ENCODE measurements at regions of chr17 and their contacts with region 1.

Region 1: DNA sequence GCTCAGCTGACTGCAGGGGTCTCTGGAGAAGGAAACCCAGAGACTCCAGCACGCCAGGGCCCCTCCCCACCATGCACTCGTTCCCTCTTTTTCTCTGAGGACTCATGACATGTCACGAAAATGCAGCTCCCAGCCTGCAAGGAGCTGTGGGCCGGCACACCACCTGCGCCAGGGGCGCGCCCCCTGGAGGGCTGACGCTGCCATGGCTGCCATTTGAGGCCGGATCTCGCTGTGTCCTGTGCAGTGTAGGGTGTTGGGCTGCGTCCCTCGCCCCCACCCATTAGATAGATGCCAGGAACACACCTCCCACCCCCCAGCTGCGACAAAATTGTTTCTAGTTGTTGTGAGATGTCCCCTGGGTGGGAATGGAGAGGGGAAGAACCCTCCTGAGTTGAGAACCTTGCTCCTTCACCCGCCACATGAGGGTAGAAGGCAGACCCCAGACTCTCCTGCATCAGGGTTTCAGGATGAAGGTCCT is 8.2 kb downstream of the SYNGR2 start:
- DNase-seq: peak in 1 of 2 donors; percentile 65
- ATAC-seq: no peak
- H3K4me3 ChIP-seq: no peak overlapping the region
- H3K27ac ChIP-seq: peak overlapping the region in 3 of 4 donors; percentile 92 to 96 (median 95)
- H3K4me1 ChIP-seq: peaks cover 58 to 72% of the 10 kb centered on the region in 2 donors
- H3K27me3 ChIP-seq: no peaks in the 10 kb centered on the region
- CTCF ChIP-seq: peak; percentile 74 to 91 (median 86)
- POLR2A ChIP-seq: no peak

Region 2: GRCh38 chr17:78186692-78187595 is 10.4 kb after region 1 on chr17 and contains the starts of genes AFMID and TK1:
- in situ Hi-C with region 1: no loop called
- intact Hi-C with region 1: loop called (anchors 1 kb)
- DNase-seq: peak; percentile 93 to 96
- ATAC-seq: peak; percentile 94 to 97
- H3K4me3 ChIP-seq: peak within 1 kb of the TSS; percentile 51 to 71 (median 58)
- H3K27ac ChIP-seq: peak within 1 kb of the TSS; percentile 51 to 75 (median 64)
- H3K4me1 ChIP-seq: peaks cover 15 to 17% of the 10 kb centered on the region in 2 donors
- H3K27me3 ChIP-seq: no peaks in the 10 kb centered on the region
- CTCF ChIP-seq: peak; percentile 85 to 94 (median 91)
- POLR2A ChIP-seq: peak; percentile 33 to 81
- total RNA-seq, gene AFMID: 11.7 to 14.3 (median 12.1) TPM
- total RNA-seq, gene TK1: 0.22 to 2.1 (median 0.60) TPM

Region 3: DNA sequence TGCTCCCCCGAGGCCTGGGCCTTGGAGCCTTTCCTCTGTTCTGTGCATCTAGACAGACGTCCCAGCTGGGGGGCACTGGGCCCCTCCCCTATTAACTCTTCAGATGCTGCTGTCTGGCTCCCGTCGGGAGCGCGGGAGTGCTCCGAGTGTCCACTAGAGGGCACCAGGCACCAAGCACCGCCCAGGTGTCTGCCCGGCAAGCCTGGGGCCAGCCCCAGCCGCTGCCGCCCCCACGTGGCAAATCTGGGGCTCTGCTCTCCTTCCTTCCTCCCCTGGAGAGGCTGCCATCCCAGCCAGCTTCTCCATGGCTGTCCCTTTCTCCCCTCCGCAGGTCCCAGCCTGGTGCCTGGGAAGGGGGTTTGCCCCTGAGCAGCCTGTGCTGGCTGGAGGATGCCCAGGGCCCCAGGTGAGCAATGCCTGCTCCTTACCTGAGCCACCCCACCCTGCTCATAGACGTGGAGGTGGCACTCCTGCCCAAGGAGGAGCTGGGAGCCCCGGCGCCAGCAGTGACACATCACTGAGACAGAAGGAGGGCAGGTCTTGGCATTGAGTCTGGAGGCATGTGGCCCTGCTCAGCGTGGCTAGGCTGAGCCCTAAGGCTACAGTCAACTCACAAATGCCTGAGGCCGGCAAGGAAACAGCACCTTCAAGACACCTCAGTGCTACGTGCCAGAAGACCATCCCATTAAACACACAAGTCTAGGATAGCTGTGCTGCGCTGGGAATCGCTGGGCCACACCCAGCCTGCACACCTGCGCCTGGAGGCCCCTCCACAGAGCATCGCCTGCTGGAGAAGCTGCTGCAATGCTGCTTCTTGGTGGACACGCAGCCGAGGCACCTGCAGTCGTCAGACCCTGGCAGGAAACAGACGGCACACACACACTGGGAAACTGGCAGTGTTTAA is 74.6 kb after region 1 on chr17:
- in situ Hi-C with region 1: no loop called
- intact Hi-C with region 1: loop called (anchors 5 kb)
- DNase-seq: peak; percentile 58 to 77
- ATAC-seq: peak; percentile 67 to 74
- H3K4me3 ChIP-seq: peak overlapping the region in 1 of 4 donors; percentile 4
- H3K27ac ChIP-seq: peak overlapping the region in 1 of 4 donors; percentile 11
- H3K4me1 ChIP-seq: peaks cover 5 to 8% of the 10 kb centered on the region in 2 donors
- H3K27me3 ChIP-seq: no peaks in the 10 kb centered on the region
- CTCF ChIP-seq: peak; percentile 97 to 100 (median 99)
- POLR2A ChIP-seq: no peak

Region 4: DNA sequence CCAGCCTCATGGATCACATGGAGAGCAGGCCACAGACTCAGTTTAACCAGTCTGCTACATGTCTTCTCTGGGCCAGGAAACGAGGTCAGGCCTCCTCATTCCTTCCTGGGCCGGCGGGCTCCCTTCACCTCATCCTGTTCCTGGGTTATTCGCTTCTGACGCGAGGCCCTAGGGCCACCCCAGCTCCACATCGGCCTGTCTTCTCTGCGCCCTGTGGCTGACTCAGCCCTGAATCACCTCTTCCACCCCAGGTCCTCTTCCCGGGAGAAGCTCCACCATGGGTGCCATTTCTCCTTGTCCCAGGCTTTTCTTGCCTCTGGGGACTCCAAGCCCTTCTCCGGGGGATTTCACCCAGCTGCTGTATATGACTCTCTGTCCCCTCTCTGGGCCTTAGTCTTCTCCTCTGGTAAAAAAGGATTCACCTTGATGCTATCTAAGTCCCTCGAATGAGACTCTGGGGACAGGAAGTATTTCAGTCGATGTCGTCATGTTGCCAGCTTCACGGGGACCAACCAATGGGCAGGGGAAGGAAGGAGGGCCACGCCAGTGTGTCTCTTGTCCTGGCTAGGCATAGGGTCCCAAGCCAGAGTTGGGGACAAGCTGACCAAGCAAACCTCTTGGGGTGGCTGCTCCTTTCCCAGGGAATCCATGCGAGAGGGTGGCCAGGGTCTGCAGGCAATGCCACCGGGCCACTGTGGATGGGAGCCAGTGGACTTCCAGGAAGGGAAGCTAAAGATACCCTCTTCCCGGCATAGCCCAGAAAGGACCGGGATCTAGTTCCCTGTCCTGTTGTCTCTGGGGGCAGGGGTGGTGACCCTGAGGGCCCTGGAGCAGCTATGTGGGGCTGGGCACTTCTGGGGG is 124.6 kb after region 1 on chr17:
- in situ Hi-C with region 1: no loop called
- intact Hi-C with region 1: no loop called
- DNase-seq: no peak
- ATAC-seq: no peak
- H3K4me3 ChIP-seq: no peak overlapping the region
- H3K27ac ChIP-seq: peak overlapping the region in 1 of 4 donors; percentile 0
- H3K4me1 ChIP-seq: peaks cover 0 to 15% of the 10 kb centered on the region in 2 donors
- H3K27me3 ChIP-seq: no peaks in the 10 kb centered on the region
- CTCF ChIP-seq: no peak
- POLR2A ChIP-seq: no peak